B cell (primary cell): ENCODE measurements at regions of chr3 and their contacts with region 1.

Region 1: DNA sequence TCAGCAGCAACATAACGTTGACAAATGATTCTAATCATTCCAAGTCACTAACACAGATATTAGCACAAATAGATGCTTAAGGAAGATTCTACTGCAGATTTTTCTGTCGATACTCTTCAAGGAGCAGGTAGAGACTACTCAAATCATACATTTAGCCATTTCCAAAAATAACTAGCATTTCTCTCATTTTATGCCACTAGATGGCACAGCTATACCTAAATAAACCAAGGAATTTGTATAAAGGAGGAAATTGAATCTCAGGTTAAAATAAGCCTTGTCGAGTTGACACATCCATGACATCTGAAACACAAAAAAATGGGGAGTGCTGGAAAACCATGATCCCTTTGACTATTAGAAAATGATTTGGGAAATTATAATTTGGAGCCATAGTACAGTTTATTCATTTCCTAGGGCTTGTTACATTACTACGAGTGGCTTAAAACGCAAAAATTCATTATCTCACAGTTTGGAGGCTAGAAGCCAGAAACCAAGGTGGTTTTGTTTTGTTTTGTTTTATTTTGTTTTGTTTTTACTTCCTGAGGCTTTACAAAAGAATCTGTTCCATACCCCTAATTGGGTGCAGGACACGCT is 59.5 kb upstream of the STRIT1 start:
- DNase-seq: peak; percentile 33
- ATAC-seq: no peak
- H3K4me3 ChIP-seq: no peak overlapping the region
- H3K4me3 Mint-ChIP-seq: no peak overlapping the region
- H3K27ac ChIP-seq: no peak overlapping the region
- H3K27ac Mint-ChIP-seq: no peak overlapping the region
- H3K4me1 ChIP-seq: no peaks in the 10 kb centered on the region
- H3K4me1 Mint-ChIP-seq: no peaks in the 10 kb centered on the region
- H3K27me3 ChIP-seq: no peaks in the 10 kb centered on the region
- H3K27me3 Mint-ChIP-seq: no peaks in the 10 kb centered on the region
- CTCF ChIP-seq: peak; percentile 59

Region 2: DNA sequence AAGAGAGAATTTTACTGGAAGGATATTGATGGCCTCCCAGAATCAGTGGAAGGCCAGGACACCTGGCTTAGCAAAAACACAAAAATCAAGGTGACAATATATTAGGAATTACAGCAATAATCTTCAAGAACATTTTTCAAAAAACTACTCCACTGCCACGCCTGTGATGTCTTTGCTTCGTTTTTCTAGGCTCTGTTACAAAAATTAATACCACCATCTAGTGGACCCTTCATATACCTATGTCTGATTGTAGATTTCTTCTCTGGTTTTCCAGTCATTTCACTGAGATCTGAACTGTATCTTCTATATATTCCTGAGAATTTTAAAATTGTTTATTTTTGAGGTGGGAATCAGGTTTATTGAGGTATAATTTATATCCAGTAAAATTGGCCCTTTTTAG is 506.9 kb after region 1 on chr3:
- CTCF ChIA-PET with region 1: no interaction called
- POLR2A ChIA-PET with region 1: no interaction called
- intact Hi-C with region 1: loop called (anchors 5 kb)
- DNase-seq: peak; percentile 15
- ATAC-seq: no peak
- H3K4me3 ChIP-seq: no peak overlapping the region
- H3K4me3 Mint-ChIP-seq: no peak overlapping the region
- H3K27ac ChIP-seq: no peak overlapping the region
- H3K27ac Mint-ChIP-seq: no peak overlapping the region
- H3K4me1 ChIP-seq: peaks cover 2 to 5% of the 10 kb centered on the region in 2 donors
- H3K4me1 Mint-ChIP-seq: peaks cover 6% of the 10 kb centered on the region
- H3K27me3 ChIP-seq: no peaks in the 10 kb centered on the region
- H3K27me3 Mint-ChIP-seq: no peaks in the 10 kb centered on the region
- CTCF ChIP-seq: peak; percentile 19